Right ventricle myocardium inferior (tissue), 1 donor: ENCODE measurements at regions of chr2 and their contacts with region 1.

Region 1: DNA sequence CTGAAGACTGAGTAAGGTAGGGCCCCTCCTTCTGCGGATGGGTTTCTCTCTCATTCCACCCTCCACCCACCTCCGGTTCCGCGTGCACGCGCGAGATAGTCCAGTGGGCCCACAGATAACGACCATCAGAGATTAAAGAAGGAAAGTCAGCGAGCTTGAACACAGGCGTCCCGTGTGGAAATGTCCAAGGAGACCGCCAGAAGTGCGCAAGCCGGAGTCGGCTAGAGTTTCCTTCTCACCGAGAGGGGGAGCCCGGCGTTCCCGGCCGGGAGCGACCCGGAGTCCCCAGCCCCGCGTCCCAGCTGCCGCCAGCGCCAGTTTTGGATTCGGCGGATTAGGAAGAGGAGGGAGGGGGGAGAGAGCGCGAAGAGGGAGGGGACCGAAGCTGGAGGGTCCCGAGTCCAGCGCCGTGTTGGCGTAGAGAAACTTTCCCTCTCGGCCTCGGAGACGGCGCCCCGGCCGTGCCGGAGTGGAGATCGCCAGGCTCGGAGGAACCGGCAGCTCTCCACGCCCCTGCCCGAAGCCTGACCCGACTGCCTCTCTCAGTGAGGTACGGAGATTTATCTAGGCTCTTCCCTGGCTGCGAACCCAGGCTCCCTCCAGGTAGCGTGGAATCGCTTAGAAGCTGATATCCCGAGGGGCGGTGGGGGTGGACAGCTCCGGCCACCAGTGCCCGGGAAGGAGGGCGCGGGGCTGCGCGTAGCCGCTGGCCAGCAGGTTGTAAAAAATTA is at the start of gene GULP1:
- DNase-seq: peak; percentile 75
- ATAC-seq: peak; percentile 90
- total RNA-seq, gene GULP1: 6.7 TPM

Region 2: DNA sequence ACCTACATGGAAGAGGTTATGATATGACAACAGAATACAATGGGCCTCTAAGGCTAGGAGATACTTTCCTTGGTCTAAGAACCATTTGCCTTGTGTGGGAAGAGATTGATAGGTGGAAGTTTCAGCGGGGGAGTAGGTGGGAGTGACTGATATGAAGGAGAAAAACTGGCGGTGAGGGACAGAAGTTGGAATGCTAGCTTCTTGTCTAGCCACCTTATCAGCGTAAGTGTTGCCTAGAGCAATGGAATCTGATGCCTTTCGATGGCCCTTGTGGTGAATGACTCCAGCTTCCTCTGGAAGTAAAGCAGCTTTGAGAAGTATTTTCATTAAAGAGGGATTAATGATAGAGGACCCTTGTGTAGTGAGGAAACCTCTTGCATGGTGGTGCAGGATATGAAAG is 121.4 kb before region 1 on chr2:
- intact Hi-C with region 1: no loop called
- DNase-seq: no peak
- ATAC-seq: no peak

Region 3: DNA sequence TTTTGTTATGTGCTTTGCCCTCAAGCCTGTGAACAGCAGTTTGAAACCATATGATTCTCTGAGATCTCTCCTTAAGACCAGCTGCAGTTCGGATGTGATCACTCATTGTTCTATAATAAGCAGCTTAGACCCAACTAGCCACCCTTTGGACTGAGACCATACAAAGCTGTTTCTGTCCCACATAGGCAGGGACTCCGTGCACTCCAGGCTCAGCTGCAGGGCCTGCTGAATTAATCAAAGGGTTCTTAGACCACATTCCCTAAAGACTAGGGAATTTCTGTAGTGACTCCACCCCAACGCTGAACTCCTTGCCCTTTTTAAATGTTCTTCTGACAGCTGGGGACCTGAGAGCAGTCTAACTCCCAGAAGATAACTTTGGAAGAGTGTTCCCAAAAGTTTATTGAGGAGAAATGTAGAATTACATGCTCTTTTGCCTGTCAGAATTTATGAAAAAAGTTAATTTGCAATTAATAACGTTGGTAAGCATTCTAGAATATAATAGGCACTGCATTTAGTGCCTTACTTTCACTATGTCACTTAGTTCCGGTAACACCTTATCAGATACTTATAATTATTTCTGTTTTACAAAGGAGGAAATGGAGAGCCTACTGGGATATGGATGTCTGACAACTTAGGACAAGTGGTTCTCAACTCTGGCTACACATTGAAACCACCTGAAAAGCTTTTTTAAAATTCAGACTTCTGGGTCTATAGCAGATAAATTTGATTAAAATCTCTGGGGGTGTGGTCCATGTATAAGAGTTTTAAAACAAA is 42.2 kb after region 1 on chr2:
- intact Hi-C with region 1: loop called (anchors 5 kb)
- DNase-seq: peak; percentile 64
- ATAC-seq: peak; percentile 90

Region 4: GRCh38 chr2:188369365-188369764 is 77.6 kb after region 1 on chr2:
- intact Hi-C with region 1: loop called (anchors 2 kb)
- DNase-seq: no peak
- ATAC-seq: peak; percentile 56

Region 5: GRCh38 chr2:188381614-188382013 is 89.8 kb after region 1 on chr2:
- intact Hi-C with region 1: loop called (anchors 5 kb)
- DNase-seq: no peak
- ATAC-seq: no peak